ENCODE measurements at regions of chr16 and their contacts with region 1.

Region 1: DNA sequence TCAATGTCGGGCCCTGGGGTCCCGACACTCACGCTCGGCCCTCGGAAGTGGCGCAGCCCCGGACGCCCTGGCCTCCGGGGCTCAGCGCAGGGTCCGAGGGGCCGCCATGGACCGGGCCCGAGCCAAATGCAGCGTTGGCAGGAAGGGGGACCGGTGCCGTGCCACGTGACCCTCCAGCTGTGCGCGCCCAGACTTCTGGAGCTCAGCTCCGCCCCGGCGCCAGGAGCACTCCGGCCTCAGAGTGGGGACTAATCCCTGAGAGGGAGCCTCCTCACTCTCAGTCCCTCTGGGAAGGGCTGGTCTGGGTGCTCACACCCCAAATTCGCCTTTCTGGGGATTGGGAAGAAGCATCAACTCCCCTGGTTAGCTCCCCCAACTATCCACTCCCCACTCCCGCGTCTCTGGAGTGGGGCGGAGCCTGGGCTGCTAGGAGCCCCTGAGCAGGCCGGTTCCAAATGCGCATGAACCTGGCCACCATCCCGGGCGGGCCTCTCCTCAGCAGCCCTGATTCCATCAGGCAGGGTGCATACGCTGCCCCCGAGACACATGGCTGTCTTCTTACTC is at the start of gene B3GNT9:
- DNase-seq: peak; percentile 88 to 95 (median 94)
- ATAC-seq: peak; percentile 85 to 86
- H3K4me3 ChIP-seq: peak within 1 kb of the TSS; percentile 56
- H3K27ac ChIP-seq: peak within 1 kb of the TSS; percentile 68
- H3K4me1 ChIP-seq: peaks cover 3% of the 10 kb centered on the region
- H3K27me3 ChIP-seq: no peaks in the 10 kb centered on the region
- total RNA-seq, gene B3GNT9: 17.0 to 19.8 (median 18.7) TPM

Region 2: DNA sequence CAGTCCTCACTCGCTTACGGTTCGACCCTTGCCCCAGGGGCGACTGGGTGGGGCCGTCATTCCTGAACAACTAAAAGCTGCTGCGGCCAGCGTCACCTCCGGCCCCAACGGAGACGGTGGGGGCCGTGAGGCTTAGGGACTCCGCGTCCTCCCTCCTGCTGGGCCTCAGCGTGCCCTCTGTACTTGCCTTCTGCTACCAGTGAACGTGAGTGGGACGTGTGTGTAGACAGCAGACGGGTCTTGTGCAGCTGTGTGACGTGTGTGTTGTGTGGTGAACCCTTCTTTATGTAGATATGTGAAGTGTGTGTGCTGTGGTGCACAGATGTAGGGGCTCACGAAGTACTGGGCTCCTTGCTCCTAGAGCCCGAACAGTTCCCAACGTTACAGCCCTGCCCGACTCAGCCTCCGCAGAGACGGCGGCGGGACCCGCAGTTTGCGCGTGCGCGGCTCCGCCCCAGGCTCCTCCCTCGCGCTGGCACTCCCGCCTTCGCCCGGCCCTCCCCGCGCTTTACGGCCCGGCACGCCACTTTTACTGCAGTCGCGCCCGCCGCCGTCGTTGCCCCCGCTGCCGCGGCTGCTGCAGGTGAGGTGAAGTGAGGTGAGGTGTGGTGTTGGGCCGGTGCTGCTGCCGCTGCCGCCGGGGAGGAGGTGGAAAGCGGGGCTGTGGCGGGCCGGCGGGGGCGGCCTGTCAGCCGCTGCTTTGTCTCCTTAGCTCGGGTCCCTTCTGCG is 41.3 kb before region 1 on chr16 and contains the start of gene PHAF1:
- intact Hi-C with region 1: loop called in 1 of 4 experiments (anchors 5 kb)
- DNase-seq: peak; percentile 93 to 98 (median 97)
- ATAC-seq: peak; percentile 97
- H3K4me3 ChIP-seq: peak within 1 kb of the TSS; percentile 80
- H3K27ac ChIP-seq: peak within 1 kb of the TSS; percentile 66
- H3K4me1 ChIP-seq: peaks cover 3% of the 10 kb centered on the region
- H3K27me3 ChIP-seq: no peaks in the 10 kb centered on the region
- total RNA-seq, gene PHAF1: 11.4 to 11.8 (median 11.6) TPM

Measured in right cardiac atrium (tissue), 5 donors.